ENCODE measurements at regions of chr2 and their contacts with region 1.

Region 1: GRCh38 chr2:219402665-219403515 is 15.2 kb upstream of the DNPEP start:
- DNase-seq: peak; percentile 78
- H3K4me3 ChIP-seq: no peak overlapping the region
- H3K27ac ChIP-seq: no peak overlapping the region
- H3K27me3 ChIP-seq: no peaks in the 10 kb centered on the region
- CTCF ChIP-seq: peak; percentile 96

Region 2: GRCh38 chr2:219126551-219126950 is 276.3 kb before region 1 on chr2:
- CTCF ChIA-PET with region 1: no interaction called
- POLR2A ChIA-PET with region 1: no interaction called
- DNase-seq: no peak
- H3K4me3 ChIP-seq: no peak overlapping the region
- H3K27ac ChIP-seq: no peak overlapping the region
- H3K27me3 ChIP-seq: no peaks in the 10 kb centered on the region
- CTCF ChIP-seq: no peak

Region 3: DNA sequence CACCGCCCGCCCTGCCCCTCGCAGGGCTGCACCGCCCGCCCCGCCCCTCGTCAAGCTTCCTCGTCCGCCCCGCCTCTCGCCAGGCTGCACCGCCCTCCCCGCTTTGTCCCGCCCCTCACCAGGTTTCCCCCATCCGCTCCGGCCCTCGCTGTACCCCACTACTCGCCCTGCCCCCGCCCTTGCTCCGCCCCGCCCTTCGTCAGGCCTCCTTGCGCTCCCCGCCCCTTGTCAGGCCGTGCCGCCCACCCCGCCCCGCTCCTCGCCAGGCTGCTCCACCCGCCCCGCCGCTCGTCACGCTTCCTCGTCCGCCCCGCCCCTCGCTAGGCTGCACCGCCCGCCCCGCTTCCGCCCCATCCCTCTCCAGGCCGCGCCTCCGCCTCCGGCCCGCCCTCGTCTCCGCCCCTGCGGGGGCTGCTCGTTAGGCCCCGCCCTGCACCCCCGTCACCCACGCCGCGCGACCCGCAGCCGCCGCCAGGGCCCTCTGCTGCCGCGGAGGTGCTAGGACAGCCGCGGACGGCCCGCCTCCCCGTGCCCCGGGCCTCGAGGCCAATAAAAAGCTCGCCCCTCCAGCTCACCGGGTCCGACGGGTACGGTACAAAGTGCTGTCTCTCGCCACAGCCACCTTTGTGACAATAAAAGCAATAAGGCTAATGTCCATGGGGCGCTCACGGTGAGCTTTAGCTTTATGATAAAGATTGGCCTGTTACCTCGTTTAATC is 14.6 kb before region 1 on chr2:
- CTCF ChIA-PET with region 1: interaction called, 60 read pairs
- POLR2A ChIA-PET with region 1: interaction called, 6 read pairs
- DNase-seq: peak; percentile 96
- H3K4me3 ChIP-seq: peak overlapping the region; percentile 49
- H3K27ac ChIP-seq: no peak overlapping the region
- H3K27me3 ChIP-seq: peaks cover 8% of the 10 kb centered on the region
- CTCF ChIP-seq: peak; percentile 46

Region 4: GRCh38 chr2:219459460-219460311 is 56.8 kb after region 1 on chr2:
- CTCF ChIA-PET with region 1: interaction called, 20 read pairs
- POLR2A ChIA-PET with region 1: interaction called, 4 read pairs
- DNase-seq: no peak
- H3K4me3 ChIP-seq: no peak overlapping the region
- H3K27ac ChIP-seq: peak overlapping the region; percentile 70
- H3K27me3 ChIP-seq: no peaks in the 10 kb centered on the region
- CTCF ChIP-seq: peak; percentile 95

Region 5: DNA sequence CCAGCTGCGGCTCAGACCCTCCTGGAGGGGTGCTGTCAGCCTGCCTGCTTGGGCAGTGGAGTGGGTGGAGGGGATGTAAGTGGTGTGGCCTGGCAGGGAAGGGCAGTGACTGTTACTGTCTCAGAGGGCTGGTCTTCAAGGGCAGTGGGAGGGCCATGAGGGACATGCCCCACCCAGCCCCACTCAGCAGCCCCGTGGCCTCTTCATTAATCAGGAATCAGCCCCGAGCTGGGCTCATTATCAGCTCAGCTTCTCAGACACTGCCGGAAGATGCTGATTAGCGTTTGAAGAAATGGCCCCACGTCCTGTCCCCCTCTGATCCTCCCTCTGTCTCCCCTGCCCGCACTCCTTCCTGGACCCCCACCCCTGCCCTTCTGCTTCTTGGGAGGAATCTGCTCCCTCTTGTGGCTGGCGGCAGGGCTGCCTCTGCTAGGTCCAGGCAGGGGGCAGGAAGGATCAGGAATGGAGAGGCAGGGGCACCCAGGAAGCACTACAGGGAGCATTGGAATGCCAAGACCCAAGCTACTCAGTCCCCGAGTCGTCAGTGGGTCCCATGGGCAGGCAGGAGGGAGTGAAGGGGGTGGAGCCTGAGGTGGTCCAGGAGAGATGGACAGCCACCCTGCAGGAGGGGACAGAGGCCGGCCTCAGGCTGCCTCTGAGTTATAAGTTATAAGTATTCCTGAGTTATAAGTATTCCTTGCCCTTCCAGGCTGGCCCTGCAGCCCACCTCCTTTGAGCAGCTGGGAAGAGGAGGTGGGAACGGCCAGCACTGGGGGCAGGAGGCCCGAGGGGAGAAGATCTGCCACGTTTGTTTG is 118.4 kb after region 1 on chr2:
- CTCF ChIA-PET with region 1: interaction called, 270 read pairs
- POLR2A ChIA-PET with region 1: no interaction called
- DNase-seq: no peak
- H3K4me3 ChIP-seq: no peak overlapping the region
- H3K27ac ChIP-seq: no peak overlapping the region
- H3K27me3 ChIP-seq: peaks cover 19% of the 10 kb centered on the region
- CTCF ChIP-seq: peak; percentile 87

Region 6: DNA sequence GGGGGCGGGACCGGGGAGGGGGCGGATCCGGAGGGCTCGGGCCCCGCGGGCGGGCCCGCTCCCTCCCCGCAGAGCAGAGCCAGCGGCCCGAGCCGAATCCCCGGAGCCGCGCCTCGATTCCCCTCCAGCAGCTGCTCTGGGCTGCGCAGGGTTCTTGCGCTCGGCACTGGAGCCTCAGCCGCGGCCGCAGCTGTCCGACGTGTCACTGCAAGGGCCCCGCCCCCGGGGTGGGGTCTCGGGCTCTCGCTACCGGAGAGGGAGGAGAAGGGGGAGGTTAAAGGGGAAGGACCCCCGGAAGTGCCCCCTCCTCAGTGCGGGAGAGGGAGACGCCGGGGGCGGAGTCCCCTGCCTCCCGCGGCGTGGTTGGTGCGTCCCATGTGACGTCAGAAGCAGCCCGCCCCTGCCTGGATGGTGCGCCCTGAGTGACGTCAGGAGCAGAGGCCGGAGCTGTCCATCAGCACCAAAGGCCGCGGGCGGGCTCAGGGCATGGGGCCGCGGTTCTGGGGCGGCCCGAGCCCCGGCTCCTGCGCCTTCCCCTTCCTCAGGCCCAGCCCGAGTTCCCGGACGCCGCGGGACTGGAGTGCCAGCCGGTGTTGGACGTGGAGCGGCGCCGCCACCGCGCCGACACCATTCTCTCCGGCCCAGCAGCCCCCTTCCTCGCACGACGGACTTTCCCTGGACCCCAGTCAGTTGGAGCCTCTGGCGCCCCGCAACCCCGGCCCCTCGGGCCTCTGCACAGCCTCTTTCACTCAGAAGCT is 140.9 kb after region 1 on chr2 and contains the starts of genes CHPF and TMEM198:
- CTCF ChIA-PET with region 1: interaction called, 12 read pairs
- POLR2A ChIA-PET with region 1: no interaction called
- DNase-seq: peak; percentile 95
- H3K4me3 ChIP-seq: peak within 1 kb of the TSS; percentile 75
- H3K27ac ChIP-seq: peak within 1 kb of the TSS; percentile 78
- H3K27me3 ChIP-seq: no peaks in the 10 kb centered on the region
- CTCF ChIP-seq: no peak
- polyA plus RNA-seq, gene CHPF: 24.4 and 37.2 TPM in 2 replicates
- polyA plus RNA-seq, gene TMEM198: 0.83 and 1.2 TPM in 2 replicates

Region 7: GRCh38 chr2:219619235-219619634 is 216.3 kb after region 1 on chr2:
- CTCF ChIA-PET with region 1: no interaction called
- POLR2A ChIA-PET with region 1: no interaction called
- DNase-seq: no peak
- H3K4me3 ChIP-seq: no peak overlapping the region
- H3K27ac ChIP-seq: no peak overlapping the region
- H3K27me3 ChIP-seq: peaks cover 12% of the 10 kb centered on the region
- CTCF ChIP-seq: no peak

Measured in AG04450 (cell line).